ENCODE measurements at regions of chr10 and their contacts with region 1.

Region 1: DNA sequence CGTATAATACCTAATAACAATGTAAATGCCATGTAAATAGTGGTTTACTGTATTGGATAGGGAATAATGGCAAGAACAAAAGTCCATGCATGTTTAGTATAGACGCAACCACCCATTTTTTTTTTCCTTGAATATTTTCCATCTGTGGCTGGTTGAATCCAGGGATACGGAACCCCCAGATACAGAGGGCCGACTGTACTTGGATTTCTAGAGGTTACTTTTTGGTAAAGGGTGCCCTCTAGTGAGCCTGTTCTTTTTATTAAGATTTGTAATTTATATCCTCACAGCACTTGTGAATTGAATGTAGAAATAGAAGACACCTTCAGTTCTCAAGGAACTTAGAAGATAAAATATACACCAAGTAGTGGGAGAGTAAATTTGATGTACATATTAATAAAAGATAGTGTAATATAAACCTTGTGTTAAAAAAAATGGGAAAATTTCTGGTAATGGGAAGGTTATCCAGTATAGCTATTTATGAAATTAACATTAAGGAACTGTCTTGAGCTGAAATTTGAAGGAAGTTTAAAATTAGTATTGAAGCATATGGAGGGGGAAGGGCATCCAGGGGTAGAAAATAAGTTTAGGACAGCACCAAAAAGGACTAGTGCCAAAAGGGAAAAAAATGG is 32.0 kb downstream of the EXOC6 start:
- DNase-seq: peak; percentile 70
- ATAC-seq: peak; percentile 39
- H3K4me3 ChIP-seq: no peak overlapping the region
- H3K4me3 Mint-ChIP-seq: no peak overlapping the region
- H3K27ac ChIP-seq: no peak overlapping the region
- H3K27ac Mint-ChIP-seq: no peak overlapping the region
- H3K4me1 ChIP-seq: peaks cover 0 to 12% of the 10 kb centered on the region in 2 donors
- H3K4me1 Mint-ChIP-seq: peaks cover 29% of the 10 kb centered on the region
- H3K27me3 ChIP-seq: no peaks in the 10 kb centered on the region
- H3K27me3 Mint-ChIP-seq: no peaks in the 10 kb centered on the region
- CTCF ChIP-seq: peak; percentile 78

Region 2: DNA sequence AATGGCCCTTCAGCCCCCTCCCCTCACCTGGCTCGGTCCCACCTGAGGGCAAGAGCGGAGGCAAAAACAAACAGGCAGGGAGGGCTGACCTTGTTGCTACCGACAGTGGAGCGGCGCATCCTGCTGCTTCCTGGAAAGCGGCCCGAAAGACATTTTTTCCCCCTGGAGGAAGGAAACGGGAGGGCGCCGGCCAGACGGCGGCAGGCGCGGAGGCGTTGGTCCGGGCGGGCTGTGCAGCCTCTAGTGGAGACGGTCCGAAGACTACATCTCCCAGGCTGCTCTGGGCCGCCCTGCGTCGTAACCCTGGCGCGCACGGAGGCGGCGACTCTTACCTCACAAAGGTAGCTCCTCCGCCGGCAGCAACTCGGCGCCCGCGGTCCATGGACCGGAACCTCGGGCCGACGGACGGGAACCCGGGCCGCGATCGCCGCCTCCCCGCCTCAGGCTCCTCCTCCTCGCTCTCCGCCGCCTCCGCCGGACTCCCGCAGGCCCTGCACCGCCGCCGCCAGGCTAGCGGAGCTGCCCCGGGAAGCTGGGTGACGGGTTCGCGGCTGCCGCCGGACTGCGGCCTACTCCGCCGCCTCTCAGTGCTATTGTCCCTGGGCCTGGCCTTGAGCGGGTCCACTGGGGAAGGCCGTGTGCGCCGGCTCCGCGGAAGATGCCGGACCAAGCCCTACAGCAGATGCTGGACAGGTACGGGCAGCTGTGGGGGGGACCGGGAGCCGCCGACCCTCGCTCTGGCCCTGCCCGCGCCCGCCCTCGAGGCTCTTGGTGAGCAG is 589.3 kb before region 1 on chr10 and contains the starts of genes CPEB3 and MARCHF5:
- CTCF ChIA-PET with region 1: no interaction called
- POLR2A ChIA-PET with region 1: no interaction called
- intact Hi-C with region 1: no loop called
- DNase-seq: peak; percentile 96
- ATAC-seq: peak; percentile 97
- H3K4me3 ChIP-seq: peak within 1 kb of the TSS; percentile 57 to 99 (median 85)
- H3K4me3 Mint-ChIP-seq: peak within 1 kb of the TSS; percentile 95
- H3K27ac ChIP-seq: peak within 1 kb of the TSS; percentile 62 to 88
- H3K27ac Mint-ChIP-seq: peak within 1 kb of the TSS; percentile 91
- H3K4me1 ChIP-seq: peaks cover 9 to 20% of the 10 kb centered on the region in 2 donors
- H3K4me1 Mint-ChIP-seq: peaks cover 29% of the 10 kb centered on the region
- H3K27me3 ChIP-seq: no peaks in the 10 kb centered on the region
- H3K27me3 Mint-ChIP-seq: no peaks in the 10 kb centered on the region
- CTCF ChIP-seq: peak; percentile 68
- total RNA-seq, gene CPEB3: 5.0 and 6.7 TPM in 2 replicates
- total RNA-seq, gene MARCHF5: 25.9 and 27.8 TPM in 2 replicates

Region 3: DNA sequence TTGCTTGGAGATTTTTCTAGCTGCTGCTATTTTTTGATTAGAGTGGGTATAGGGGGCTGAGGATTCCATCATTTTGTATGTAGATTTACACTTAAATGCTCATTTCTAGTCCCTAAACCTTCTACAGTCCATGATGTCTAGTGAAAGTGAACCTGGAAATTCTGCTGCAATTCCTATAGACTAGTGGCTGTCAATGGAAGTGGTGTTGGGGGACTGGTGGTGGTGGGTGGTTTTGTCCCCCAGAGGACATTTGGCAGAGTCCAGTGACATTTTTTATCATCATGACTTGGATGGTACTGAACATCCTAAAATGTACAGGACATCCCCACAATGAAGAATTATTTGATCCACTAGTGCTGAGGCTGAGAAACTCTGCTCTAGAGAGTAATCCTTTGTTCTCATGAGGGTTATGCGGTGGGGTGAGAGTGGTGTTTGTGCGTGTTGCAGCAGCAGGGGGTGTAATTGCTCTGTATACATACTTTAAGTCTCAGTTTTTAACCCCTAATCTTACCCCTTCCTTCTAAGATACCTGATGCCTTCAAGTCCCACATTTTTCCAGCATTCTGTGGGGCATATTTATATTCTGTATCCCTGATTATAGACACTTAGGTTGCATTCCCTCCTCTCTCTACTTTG is 252.4 kb before region 1 on chr10:
- CTCF ChIA-PET with region 1: interaction called, 11 read pairs
- POLR2A ChIA-PET with region 1: no interaction called
- intact Hi-C with region 1: loop called (anchors 1 kb)
- DNase-seq: peak; percentile 49
- ATAC-seq: peak; percentile 58
- H3K4me3 ChIP-seq: no peak overlapping the region
- H3K4me3 Mint-ChIP-seq: no peak overlapping the region
- H3K27ac ChIP-seq: no peak overlapping the region
- H3K27ac Mint-ChIP-seq: no peak overlapping the region
- H3K4me1 ChIP-seq: no peaks in the 10 kb centered on the region
- H3K4me1 Mint-ChIP-seq: no peaks in the 10 kb centered on the region
- H3K27me3 ChIP-seq: no peaks in the 10 kb centered on the region
- H3K27me3 Mint-ChIP-seq: no peaks in the 10 kb centered on the region
- CTCF ChIP-seq: peak; percentile 30

Region 4: DNA sequence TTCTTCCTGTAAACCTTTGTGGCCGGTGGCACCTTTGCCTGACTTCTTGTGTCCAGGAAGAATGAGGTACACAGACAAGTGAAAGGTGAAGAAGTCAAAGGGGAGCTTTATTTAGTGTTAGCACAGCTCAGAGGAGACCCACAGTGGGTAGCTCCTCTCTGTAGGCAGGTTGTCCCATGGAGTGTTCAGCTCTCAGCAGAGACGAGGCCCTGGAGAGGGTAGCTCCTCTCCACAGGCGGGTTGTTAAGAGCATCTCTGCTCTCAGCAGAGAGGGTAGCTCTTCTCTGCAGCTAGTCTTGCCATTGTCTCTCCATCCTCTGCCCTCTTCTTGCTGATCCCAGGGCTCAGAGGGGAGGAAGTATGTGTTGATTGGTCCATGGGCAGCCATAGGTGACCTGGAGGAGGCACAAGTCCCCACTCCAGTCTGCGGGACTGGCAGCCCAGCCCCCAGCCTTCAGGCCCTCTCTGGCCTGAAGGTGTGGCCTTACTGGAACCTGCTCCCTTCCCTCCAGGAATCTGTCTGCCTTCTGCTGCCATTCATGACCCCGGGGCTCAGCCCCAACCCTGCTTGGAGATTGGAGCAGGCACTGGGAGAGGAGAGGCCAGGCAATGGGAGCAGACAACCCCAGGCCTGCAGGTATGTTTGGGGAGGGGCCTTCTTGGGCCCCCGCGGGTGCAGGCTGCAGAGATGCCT is 166.0 kb before region 1 on chr10:
- CTCF ChIA-PET with region 1: no interaction called
- POLR2A ChIA-PET with region 1: no interaction called
- intact Hi-C with region 1: no loop called
- DNase-seq: no peak
- ATAC-seq: no peak
- H3K4me3 ChIP-seq: no peak overlapping the region
- H3K4me3 Mint-ChIP-seq: no peak overlapping the region
- H3K27ac ChIP-seq: no peak overlapping the region
- H3K27ac Mint-ChIP-seq: no peak overlapping the region
- H3K4me1 ChIP-seq: peaks cover 62 to 70% of the 10 kb centered on the region in 2 donors
- H3K4me1 Mint-ChIP-seq: peaks cover 68% of the 10 kb centered on the region
- H3K27me3 ChIP-seq: no peaks in the 10 kb centered on the region
- H3K27me3 Mint-ChIP-seq: no peaks in the 10 kb centered on the region
- CTCF ChIP-seq: no peak

Region 5: DNA sequence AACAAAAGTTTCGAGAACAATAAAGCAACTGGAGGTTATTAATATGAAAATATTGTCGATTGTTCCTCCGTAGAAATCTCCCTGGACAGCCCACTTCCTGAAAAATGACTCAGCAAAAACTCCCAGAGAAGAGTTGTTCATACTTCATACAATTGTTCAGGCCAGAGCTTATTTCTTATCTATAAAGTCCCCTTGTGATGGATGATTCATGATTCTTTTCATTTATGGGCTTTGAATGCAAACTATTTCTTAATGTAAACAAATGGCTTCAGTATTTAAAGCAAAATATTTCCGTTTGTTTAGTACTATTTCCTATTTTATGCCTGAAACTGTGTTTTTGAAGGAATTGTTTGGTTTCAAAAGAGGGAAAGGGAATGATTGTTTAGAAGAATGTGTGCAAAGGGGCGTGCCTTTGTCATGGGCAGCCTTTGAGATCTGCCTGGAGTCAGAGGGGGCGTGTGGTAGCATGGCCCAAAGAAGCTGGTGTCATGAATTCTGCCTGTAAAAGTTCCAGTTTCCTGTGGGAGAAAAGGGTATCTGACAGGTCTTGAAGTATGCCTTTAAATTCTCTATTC is 58.2 kb before region 1 on chr10:
- CTCF ChIA-PET with region 1: interaction called, 4 read pairs
- POLR2A ChIA-PET with region 1: no interaction called
- intact Hi-C with region 1: loop called (anchors 10 kb)
- DNase-seq: no peak
- ATAC-seq: no peak
- H3K4me3 ChIP-seq: no peak overlapping the region
- H3K4me3 Mint-ChIP-seq: no peak overlapping the region
- H3K27ac ChIP-seq: no peak overlapping the region
- H3K27ac Mint-ChIP-seq: no peak overlapping the region
- H3K4me1 ChIP-seq: peaks cover 4 to 15% of the 10 kb centered on the region in 2 donors
- H3K4me1 Mint-ChIP-seq: peaks cover 25% of the 10 kb centered on the region
- H3K27me3 ChIP-seq: no peaks in the 10 kb centered on the region
- H3K27me3 Mint-ChIP-seq: peaks cover under 1% of the 10 kb centered on the region
- CTCF ChIP-seq: no peak

Region 6: GRCh38 chr10:93790439-93790838 is 910.1 kb after region 1 on chr10:
- CTCF ChIA-PET with region 1: no interaction called
- POLR2A ChIA-PET with region 1: no interaction called
- intact Hi-C with region 1: no loop called
- DNase-seq: no peak
- ATAC-seq: no peak
- H3K4me3 ChIP-seq: no peak overlapping the region
- H3K4me3 Mint-ChIP-seq: no peak overlapping the region
- H3K27ac ChIP-seq: no peak overlapping the region
- H3K27ac Mint-ChIP-seq: no peak overlapping the region
- H3K4me1 ChIP-seq: no peaks in the 10 kb centered on the region
- H3K4me1 Mint-ChIP-seq: no peaks in the 10 kb centered on the region
- H3K27me3 ChIP-seq: no peaks in the 10 kb centered on the region
- H3K27me3 Mint-ChIP-seq: peaks cover 16% of the 10 kb centered on the region
- CTCF ChIP-seq: no peak